ENCODE measurements at regions of chr11 and their contacts with region 1.

Region 1: DNA sequence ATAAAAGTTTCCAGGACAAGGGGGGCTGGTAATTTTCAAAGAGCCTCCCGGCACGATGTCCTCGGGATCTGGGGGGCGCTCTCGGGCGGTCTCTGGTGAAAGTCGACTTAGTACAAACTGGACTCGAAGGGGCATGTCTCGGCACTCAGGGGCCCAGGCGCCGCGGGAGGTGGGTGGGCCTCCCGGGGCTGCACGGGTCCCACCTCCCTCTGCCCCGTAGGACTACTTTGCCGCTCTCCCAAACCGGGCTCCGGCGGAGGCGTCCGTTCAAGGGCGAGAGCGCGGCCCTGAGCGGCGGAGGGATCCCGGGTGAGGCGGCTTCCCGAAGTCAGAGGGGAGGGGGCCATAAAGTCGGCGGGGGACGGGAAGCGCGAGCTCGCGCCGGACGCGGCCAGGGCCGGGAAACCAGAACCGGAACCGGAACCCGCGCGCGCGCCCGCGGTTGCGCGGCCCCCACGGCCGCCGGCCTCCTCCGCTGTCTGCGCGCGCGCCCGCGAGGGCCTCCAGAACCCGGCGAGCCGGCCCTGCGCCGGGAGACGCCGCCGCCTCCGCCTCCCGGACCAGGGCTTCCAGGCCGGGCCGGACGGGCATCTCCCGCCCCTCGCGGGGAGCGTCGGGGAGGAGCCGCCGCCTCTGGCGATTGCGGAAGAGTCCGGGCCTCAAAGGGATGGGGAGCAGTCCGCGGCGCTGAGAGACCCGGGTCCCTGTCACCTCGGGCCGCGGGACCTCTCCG is at the start of gene ARHGEF12:
- DNase-seq: peak; percentile 95
- ATAC-seq: peak; percentile 63
- H3K4me3 Mint-ChIP-seq: peak within 1 kb of the TSS; percentile 99
- H3K27ac Mint-ChIP-seq: peak within 1 kb of the TSS; percentile 89
- H3K4me1 Mint-ChIP-seq: peaks cover 30% of the 10 kb centered on the region
- H3K27me3 Mint-ChIP-seq: no peaks in the 10 kb centered on the region
- CTCF ChIP-seq: no peak
- total RNA-seq, gene ARHGEF12: 32.0 to 35.8 TPM (median 32.2 TPM) in 3 replicates

Region 2: GRCh38 chr11:120121871-120122473 is 214.1 kb before region 1 on chr11:
- CTCF ChIA-PET with region 1: no interaction called
- POLR2A ChIA-PET with region 1: no interaction called
- DNase-seq: no peak
- ATAC-seq: no peak
- H3K4me3 Mint-ChIP-seq: no peak overlapping the region
- H3K27ac Mint-ChIP-seq: no peak overlapping the region
- H3K4me1 Mint-ChIP-seq: peaks cover 12% of the 10 kb centered on the region
- H3K27me3 Mint-ChIP-seq: no peaks in the 10 kb centered on the region
- CTCF ChIP-seq: no peak

Region 3: GRCh38 chr11:120324932-120325810 is 10.9 kb before region 1 on chr11 and contains the start of gene TLCD5:
- CTCF ChIA-PET with region 1: interaction called, 26 read pairs
- POLR2A ChIA-PET with region 1: interaction called, 4 read pairs
- DNase-seq: peak; percentile 88
- ATAC-seq: peak; percentile 95
- H3K4me3 Mint-ChIP-seq: peak within 1 kb of the TSS; percentile 78
- H3K27ac Mint-ChIP-seq: peak within 1 kb of the TSS; percentile 74; the same call in 1 of the 2 replicates
- H3K4me1 Mint-ChIP-seq: peaks cover 17% of the 10 kb centered on the region
- H3K27me3 Mint-ChIP-seq: peaks cover 16% of the 10 kb centered on the region
- CTCF ChIP-seq: no peak
- total RNA-seq, gene TLCD5: 8.2 to 10.2 TPM (median 8.3 TPM) in 3 replicates

Region 4: GRCh38 chr11:120500414-120501071 is 164.5 kb after region 1 on chr11:
- CTCF ChIA-PET with region 1: interaction called, 11 read pairs
- POLR2A ChIA-PET with region 1: no interaction called
- DNase-seq: no peak
- ATAC-seq: peak; percentile 41; the same call in 1 of the 2 replicates
- H3K4me3 Mint-ChIP-seq: no peak overlapping the region
- H3K27ac Mint-ChIP-seq: peak overlapping the region; percentile 21; the same call in 1 of the 2 replicates
- H3K4me1 Mint-ChIP-seq: peaks cover 65% of the 10 kb centered on the region
- H3K27me3 Mint-ChIP-seq: no peaks in the 10 kb centered on the region
- CTCF ChIP-seq: no peak

Measured in WTC11 (cell line).